ENCODE measurements at regions of chr5 and their contacts with region 1.

Region 1: DNA sequence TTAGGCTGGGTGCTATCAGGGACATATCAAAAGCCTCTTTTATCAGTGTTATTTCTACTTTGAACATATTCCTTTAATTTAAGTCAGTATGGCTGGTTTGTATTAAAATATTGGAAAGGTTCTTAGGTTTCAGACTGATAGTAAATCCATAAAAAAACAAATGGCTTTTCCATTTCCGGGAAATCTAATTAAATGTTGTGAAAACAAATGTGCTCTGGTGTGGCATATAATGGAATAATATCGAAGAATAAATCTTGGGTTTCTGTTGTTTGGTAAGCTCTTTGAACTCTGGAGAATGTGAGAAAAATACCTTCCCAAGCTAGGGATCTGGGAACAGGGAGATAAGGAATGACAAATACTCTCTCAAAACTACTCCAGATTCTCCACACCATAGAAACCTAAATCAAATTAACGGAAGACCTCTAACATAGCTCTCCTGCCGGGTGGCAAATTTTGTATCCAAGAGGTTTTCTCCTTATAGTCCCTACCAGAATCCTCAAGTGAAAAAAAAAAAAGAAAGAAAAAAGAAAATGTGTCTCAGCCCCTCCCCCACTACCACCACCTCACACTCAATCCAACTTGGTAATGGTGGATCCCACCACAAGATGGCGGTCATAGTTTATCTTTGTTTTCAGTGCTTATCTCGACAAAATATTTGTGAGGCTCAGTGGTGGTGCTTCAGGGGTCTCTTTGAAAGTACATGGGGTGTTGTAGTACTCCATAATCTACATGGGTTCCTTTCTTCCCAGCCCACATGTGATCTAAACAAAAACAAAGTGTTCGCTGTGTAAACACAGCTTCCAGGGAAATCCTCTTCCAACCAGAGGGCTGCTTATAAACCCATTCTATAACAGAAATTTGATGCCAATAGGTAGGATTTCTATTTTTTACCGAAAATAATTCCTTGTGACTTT is 54.6 kb upstream of the FST start:
- DNase-seq: no peak
- ATAC-seq: no peak
- H3K4me3 ChIP-seq: no peak overlapping the region
- H3K27ac ChIP-seq: no peak overlapping the region
- H3K4me1 ChIP-seq: peaks cover 6% of the 10 kb centered on the region in 2 donors
- H3K27me3 ChIP-seq: no peaks in the 10 kb centered on the region

Region 2: GRCh38 chr5:53170748-53171349 is 255.0 kb before region 1 on chr5:
- intact Hi-C with region 1: loop called (anchors 2 to 5 kb)
- DNase-seq: no peak
- ATAC-seq: no peak
- H3K4me3 ChIP-seq: no peak overlapping the region
- H3K27ac ChIP-seq: no peak overlapping the region
- H3K4me1 ChIP-seq: no peaks in the 10 kb centered on the region
- H3K27me3 ChIP-seq: no peaks in the 10 kb centered on the region

Region 3: GRCh38 chr5:53262348-53262970 is 163.4 kb before region 1 on chr5:
- intact Hi-C with region 1: loop called (anchors 5 kb)
- DNase-seq: no peak
- ATAC-seq: peak; percentile 59
- H3K4me3 ChIP-seq: no peak overlapping the region
- H3K27ac ChIP-seq: no peak overlapping the region
- H3K4me1 ChIP-seq: no peaks in the 10 kb centered on the region
- H3K27me3 ChIP-seq: no peaks in the 10 kb centered on the region

Region 4: GRCh38 chr5:53291047-53291927 is 134.6 kb before region 1 on chr5:
- intact Hi-C with region 1: no loop called
- DNase-seq: no peak
- ATAC-seq: peak; percentile 68
- H3K4me3 ChIP-seq: no peak overlapping the region
- H3K27ac ChIP-seq: no peak overlapping the region
- H3K4me1 ChIP-seq: no peaks in the 10 kb centered on the region
- H3K27me3 ChIP-seq: no peaks in the 10 kb centered on the region

Region 5: GRCh38 chr5:53378590-53379247 is 47.1 kb before region 1 on chr5:
- intact Hi-C with region 1: no loop called
- DNase-seq: no peak
- ATAC-seq: no peak
- H3K4me3 ChIP-seq: no peak overlapping the region
- H3K27ac ChIP-seq: no peak overlapping the region
- H3K4me1 ChIP-seq: no peaks in the 10 kb centered on the region
- H3K27me3 ChIP-seq: no peaks in the 10 kb centered on the region